CD8-positive, alpha-beta T cell (primary cell): ENCODE measurements at regions of chr4 and their contacts with region 1.

Region 1: GRCh38 chr4:83455281-83456129 is at the starts of genes HELQ and MRPS18C:
- DNase-seq: peak; percentile 89 to 100 (median 92)
- ATAC-seq: peak; percentile 86
- H3K4me3 ChIP-seq: peak within 1 kb of the TSS; percentile 62 to 91
- H3K4me3 Mint-ChIP-seq: peak within 1 kb of the TSS; percentile 100
- H3K27ac ChIP-seq: peak within 1 kb of the TSS; percentile 99
- H3K27ac Mint-ChIP-seq: peak within 1 kb of the TSS; percentile 100
- H3K4me1 ChIP-seq: peaks cover 27% of the 10 kb centered on the region
- H3K4me1 Mint-ChIP-seq: peaks cover 65% of the 10 kb centered on the region
- H3K27me3 ChIP-seq: no peaks in the 10 kb centered on the region
- H3K27me3 Mint-ChIP-seq: no peaks in the 10 kb centered on the region
- CTCF ChIP-seq: no peak
- total RNA-seq, gene HELQ: 25.6 to 28.0 TPM
- total RNA-seq, gene MRPS18C: 17.7 to 24.1 TPM

Region 2: DNA sequence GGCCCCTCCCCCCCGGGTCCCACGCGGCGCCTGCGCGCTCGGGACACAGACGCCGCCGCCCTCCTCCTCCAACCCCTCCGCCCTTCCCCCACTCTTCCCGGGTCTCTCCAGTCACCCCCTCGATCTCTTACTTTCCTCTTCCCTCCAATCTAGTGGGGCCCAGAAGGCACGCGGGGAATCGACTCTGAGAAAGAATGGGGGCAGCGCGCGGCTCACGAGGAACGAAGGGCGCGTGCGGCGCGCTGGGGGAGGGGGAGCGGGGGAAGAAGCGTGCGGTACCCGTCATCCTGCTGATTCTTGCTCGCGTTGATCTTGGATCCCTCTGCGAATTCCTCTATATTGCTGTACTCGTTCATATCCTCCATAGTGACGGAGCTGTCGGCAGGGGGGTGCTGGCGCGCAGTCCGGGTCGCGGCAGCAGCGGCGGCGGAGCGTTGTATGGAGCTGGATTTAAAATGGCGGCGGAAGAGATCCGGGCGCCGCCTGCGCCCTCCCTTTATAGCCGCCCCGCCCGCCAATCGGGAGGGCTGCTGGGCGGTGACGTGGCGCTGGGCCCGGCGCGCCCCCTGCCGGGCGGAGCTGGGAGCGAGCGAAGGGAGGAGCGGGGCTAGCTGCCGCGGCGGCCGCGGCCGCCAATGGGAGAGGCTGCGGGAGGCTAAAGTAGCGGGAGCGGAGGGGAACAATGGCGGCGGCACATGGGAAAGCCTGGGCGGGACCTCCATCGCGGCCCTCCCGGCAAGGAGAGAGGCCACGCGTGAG is 1026.4 kb before region 1 on chr4:
- CTCF ChIA-PET with region 1: no interaction called
- POLR2A ChIA-PET with region 1: interaction called, 11 read pairs
- intact Hi-C with region 1: loop called in 1 of 2 experiments (anchors 5 kb)
- DNase-seq: peak; percentile 87 to 96 (median 93)
- ATAC-seq: peak; percentile 62
- H3K4me3 ChIP-seq: peak overlapping the region; percentile 91 to 99
- H3K4me3 Mint-ChIP-seq: peak overlapping the region; percentile 100
- H3K27ac ChIP-seq: peak overlapping the region; percentile 99 to 100
- H3K27ac Mint-ChIP-seq: peak overlapping the region; percentile 99
- H3K4me1 ChIP-seq: peaks cover 40% of the 10 kb centered on the region
- H3K4me1 Mint-ChIP-seq: peaks cover 72% of the 10 kb centered on the region
- H3K27me3 ChIP-seq: no peaks in the 10 kb centered on the region
- H3K27me3 Mint-ChIP-seq: no peaks in the 10 kb centered on the region
- CTCF ChIP-seq: peak; percentile 90

Region 3: GRCh38 chr4:82900331-82901128 is 555.0 kb before region 1 on chr4 and contains the start of gene THAP9:
- CTCF ChIA-PET with region 1: interaction called, 3 read pairs
- POLR2A ChIA-PET with region 1: interaction called, 4 read pairs
- intact Hi-C with region 1: loop called in 1 of 2 experiments (anchors 5 kb)
- DNase-seq: peak; percentile 95 to 100 (median 97)
- ATAC-seq: peak; percentile 88
- H3K4me3 ChIP-seq: peak within 1 kb of the TSS; percentile 73 to 84
- H3K4me3 Mint-ChIP-seq: no peak within 1 kb of the TSS
- H3K27ac ChIP-seq: peak within 1 kb of the TSS; percentile 93 to 99
- H3K27ac Mint-ChIP-seq: no peak within 1 kb of the TSS
- H3K4me1 ChIP-seq: peaks cover 30% of the 10 kb centered on the region
- H3K4me1 Mint-ChIP-seq: peaks cover 21% of the 10 kb centered on the region
- H3K27me3 ChIP-seq: no peaks in the 10 kb centered on the region
- H3K27me3 Mint-ChIP-seq: no peaks in the 10 kb centered on the region
- CTCF ChIP-seq: no peak
- total RNA-seq, gene THAP9: 5.2 to 7.3 TPM

Region 4: DNA sequence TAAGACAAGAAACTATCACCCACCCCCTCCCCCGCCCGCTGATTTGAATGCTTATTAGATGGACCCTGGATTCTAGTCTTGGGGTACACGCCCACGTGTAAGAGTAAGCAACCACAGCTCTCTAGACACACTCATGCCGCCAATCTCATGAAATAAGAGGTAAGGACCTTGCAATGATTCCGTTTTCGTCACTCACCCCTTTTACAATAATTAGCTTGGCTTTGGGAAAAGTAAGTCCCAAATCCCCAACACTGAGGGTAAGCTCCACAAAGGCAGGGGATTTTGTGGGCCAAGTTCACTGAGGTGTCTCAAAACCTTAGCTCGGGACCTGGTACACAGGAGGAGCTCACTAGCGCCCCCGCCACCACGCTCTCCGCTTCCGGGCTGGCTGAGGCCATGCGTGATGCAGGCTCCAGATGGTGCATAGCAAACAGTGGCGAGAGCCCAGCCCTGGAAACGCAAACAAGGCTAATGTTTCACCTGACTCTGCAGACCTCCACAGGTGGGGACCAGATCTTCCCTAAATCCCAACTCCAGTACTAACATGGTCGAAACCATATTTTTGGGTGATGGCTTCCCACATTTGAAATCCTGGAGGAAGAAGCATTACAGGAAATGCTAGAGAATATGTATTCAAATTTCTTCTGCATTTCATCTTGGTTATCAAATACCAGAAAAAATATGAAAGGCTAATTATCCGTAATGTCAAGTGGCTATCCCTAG is 345.1 kb before region 1 on chr4:
- CTCF ChIA-PET with region 1: no interaction called
- POLR2A ChIA-PET with region 1: interaction called, 5 read pairs
- intact Hi-C with region 1: loop called in 1 of 2 experiments (anchors 10 kb)
- DNase-seq: peak; percentile 80 to 94 (median 89)
- ATAC-seq: peak; percentile 74
- H3K4me3 ChIP-seq: peak overlapping the region; percentile 69 to 79
- H3K4me3 Mint-ChIP-seq: peak overlapping the region; percentile 99
- H3K27ac ChIP-seq: peak overlapping the region; percentile 68 to 71
- H3K27ac Mint-ChIP-seq: peak overlapping the region; percentile 97
- H3K4me1 ChIP-seq: peaks cover 36% of the 10 kb centered on the region
- H3K4me1 Mint-ChIP-seq: peaks cover 48% of the 10 kb centered on the region
- H3K27me3 ChIP-seq: no peaks in the 10 kb centered on the region
- H3K27me3 Mint-ChIP-seq: no peaks in the 10 kb centered on the region
- CTCF ChIP-seq: peak; percentile 70

Region 5: DNA sequence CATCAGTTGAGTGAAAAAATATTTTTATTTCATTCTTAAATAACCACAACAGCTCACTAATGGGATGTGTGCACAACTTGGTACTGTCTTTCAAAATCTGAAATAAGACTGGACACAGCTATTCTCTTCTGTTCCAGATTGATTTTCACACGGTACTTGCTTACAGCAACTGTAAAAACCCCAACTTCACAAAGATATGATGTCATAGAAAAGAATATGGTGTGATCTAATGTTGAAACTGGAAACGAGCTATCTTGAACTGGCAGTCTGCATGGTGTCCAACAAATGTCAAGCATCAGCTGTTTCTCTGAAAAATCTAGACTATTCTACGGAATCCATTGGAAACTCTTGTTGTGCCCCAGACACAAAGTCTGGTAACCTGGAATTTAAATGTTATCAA is 14.6 kb before region 1 on chr4:
- CTCF ChIA-PET with region 1: interaction called, 4 read pairs
- POLR2A ChIA-PET with region 1: interaction called, 14 read pairs
- intact Hi-C with region 1: no loop called
- DNase-seq: no peak
- ATAC-seq: no peak
- H3K4me3 ChIP-seq: no peak overlapping the region
- H3K4me3 Mint-ChIP-seq: no peak overlapping the region
- H3K27ac ChIP-seq: no peak overlapping the region
- H3K27ac Mint-ChIP-seq: no peak overlapping the region
- H3K4me1 ChIP-seq: no peaks in the 10 kb centered on the region
- H3K4me1 Mint-ChIP-seq: peaks cover 2% of the 10 kb centered on the region
- H3K27me3 ChIP-seq: no peaks in the 10 kb centered on the region
- H3K27me3 Mint-ChIP-seq: no peaks in the 10 kb centered on the region
- CTCF ChIP-seq: no peak

Region 6: GRCh38 chr4:83658806-83659495 is 203.4 kb after region 1 on chr4:
- CTCF ChIA-PET with region 1: no interaction called
- POLR2A ChIA-PET with region 1: no interaction called
- intact Hi-C with region 1: no loop called
- DNase-seq: no peak
- ATAC-seq: no peak
- H3K4me3 ChIP-seq: no peak overlapping the region
- H3K4me3 Mint-ChIP-seq: no peak overlapping the region
- H3K27ac ChIP-seq: no peak overlapping the region
- H3K27ac Mint-ChIP-seq: no peak overlapping the region
- H3K4me1 ChIP-seq: peaks cover 11% of the 10 kb centered on the region
- H3K4me1 Mint-ChIP-seq: peaks cover 13% of the 10 kb centered on the region
- H3K27me3 ChIP-seq: no peaks in the 10 kb centered on the region
- H3K27me3 Mint-ChIP-seq: peaks cover 4% of the 10 kb centered on the region
- CTCF ChIP-seq: no peak

Region 7: DNA sequence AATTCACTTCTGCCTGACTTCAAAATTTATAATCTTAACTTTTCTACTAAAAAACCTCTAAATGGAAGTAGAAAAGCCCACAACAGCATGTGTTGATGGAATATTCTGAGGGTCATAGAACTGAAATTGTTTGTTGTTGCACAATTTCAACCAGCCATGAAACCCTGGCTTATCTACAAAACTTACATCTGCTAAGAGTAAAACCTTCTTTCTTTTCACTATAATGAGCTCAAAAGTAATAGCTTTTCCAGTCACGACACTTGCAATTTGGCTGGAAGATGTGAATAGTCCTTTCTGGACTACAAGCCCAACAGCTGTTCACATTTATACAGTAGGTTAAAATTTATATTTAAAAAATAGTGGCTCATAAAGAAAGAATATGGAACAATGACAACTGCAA is 330.4 kb after region 1 on chr4:
- CTCF ChIA-PET with region 1: no interaction called
- POLR2A ChIA-PET with region 1: no interaction called
- intact Hi-C with region 1: no loop called
- DNase-seq: no peak
- ATAC-seq: no peak
- H3K4me3 ChIP-seq: no peak overlapping the region
- H3K4me3 Mint-ChIP-seq: no peak overlapping the region
- H3K27ac ChIP-seq: no peak overlapping the region
- H3K27ac Mint-ChIP-seq: no peak overlapping the region
- H3K4me1 ChIP-seq: no peaks in the 10 kb centered on the region
- H3K4me1 Mint-ChIP-seq: no peaks in the 10 kb centered on the region
- H3K27me3 ChIP-seq: no peaks in the 10 kb centered on the region
- H3K27me3 Mint-ChIP-seq: no peaks in the 10 kb centered on the region
- CTCF ChIP-seq: no peak

Region 8: GRCh38 chr4:84338380-84338779 is 882.9 kb after region 1 on chr4:
- CTCF ChIA-PET with region 1: no interaction called
- POLR2A ChIA-PET with region 1: no interaction called
- intact Hi-C with region 1: no loop called
- DNase-seq: no peak
- ATAC-seq: no peak
- H3K4me3 ChIP-seq: no peak overlapping the region
- H3K4me3 Mint-ChIP-seq: no peak overlapping the region
- H3K27ac ChIP-seq: no peak overlapping the region
- H3K27ac Mint-ChIP-seq: no peak overlapping the region
- H3K4me1 ChIP-seq: no peaks in the 10 kb centered on the region
- H3K4me1 Mint-ChIP-seq: no peaks in the 10 kb centered on the region
- H3K27me3 ChIP-seq: no peaks in the 10 kb centered on the region
- H3K27me3 Mint-ChIP-seq: peaks cover 2% of the 10 kb centered on the region
- CTCF ChIP-seq: no peak